HCT116 (cell line): ENCODE measurements at regions of chr12 and their contacts with region 1.

Region 1: GRCh38 chr12:26651566-26652188 is 181.3 kb downstream of the ITPR2 start:
- DNase-seq: peak; percentile 41
- ATAC-seq: peak; percentile 82
- H3K4me3 ChIP-seq: no peak overlapping the region
- H3K27ac ChIP-seq: no peak overlapping the region
- H3K4me1 ChIP-seq: no peaks in the 10 kb centered on the region
- H3K27me3 ChIP-seq: no peaks in the 10 kb centered on the region
- CTCF ChIP-seq: peak; percentile 50 to 86 (median 73); a peak in 5 of 6 replicates
- POLR2A ChIP-seq: no peak
- RAD21 ChIP-seq: peak; percentile 84

Region 2: DNA sequence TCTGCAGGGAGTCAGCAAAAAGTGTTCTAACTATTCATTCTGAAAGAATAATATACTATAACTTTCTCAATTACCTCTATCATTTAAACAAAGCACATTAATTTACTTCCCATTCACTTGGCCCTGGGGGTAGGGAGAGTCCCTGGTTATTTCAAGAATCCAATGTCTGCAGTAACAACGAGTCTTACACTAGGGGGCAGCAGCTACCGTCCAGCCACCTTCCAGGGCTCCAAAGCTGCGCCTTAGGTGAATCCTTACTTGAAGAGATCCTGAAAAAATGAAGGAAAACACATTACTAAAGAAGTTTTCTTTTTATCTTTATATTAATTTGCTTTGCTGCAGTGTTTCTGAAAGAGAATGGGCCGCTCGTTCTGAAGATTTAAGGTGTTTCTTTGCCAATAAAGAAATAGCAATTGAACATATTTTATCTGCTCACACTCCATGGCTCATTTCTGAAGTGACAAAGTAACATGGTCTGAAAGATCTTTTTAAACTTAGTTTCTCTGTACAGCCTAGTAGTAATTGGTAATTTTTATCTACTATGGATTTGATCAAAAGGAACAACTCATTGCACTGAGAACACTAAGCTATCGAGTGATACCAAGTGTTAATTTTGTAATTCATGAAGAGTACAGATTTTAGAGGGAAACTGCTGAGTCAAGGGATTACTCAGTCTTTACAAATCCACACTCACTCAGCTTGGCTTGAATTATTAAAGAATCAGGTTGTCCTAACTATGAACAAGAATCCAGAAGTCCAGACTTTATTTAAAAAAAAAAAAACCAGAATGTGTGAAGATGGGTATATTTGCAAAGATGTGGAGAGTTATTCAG is 554.4 kb before region 1 on chr12:
- CTCF ChIA-PET with region 1: no interaction called
- POLR2A ChIA-PET with region 1: no interaction called
- RAD21 ChIA-PET with region 1: no interaction called
- intact Hi-C with region 1: loop called (anchors 1 kb)
- DNase-seq: peak; percentile 53
- ATAC-seq: peak; percentile 99
- H3K4me3 ChIP-seq: no peak overlapping the region
- H3K27ac ChIP-seq: no peak overlapping the region
- H3K4me1 ChIP-seq: peaks cover 9 to 12% of the 10 kb centered on the region in 2 experiments; a peak in 3 of 4 replicates
- H3K27me3 ChIP-seq: no peaks in the 10 kb centered on the region
- CTCF ChIP-seq: peak; percentile 79 to 94 (median 87)
- POLR2A ChIP-seq: no peak
- RAD21 ChIP-seq: peak; percentile 92

Region 3: DNA sequence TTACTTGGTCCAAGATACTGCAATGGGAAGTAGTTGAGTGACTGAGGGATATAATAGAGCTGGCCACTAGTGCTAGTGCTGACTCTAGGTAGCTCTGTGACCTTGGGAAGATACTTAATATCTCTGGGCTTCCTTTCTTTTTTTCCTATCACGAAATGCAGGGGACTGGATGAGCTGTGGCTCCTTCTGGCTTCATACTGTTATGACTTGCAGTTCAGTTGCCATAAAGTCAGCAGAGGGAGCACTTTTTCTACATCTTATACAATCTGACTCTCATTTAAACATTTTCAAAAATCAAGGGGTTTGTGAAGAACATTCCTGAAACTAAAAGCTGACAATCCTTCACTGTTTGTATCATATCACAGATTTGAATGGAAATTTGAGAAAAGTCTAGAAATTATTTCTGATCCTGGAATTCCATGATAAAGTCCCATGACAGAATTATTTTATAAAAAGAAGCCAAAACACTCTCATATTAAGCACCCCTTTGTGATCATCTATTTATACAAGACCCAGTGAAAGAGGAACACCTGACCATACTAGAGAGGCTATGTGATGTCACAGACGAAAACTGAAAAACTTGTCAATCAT is 532.2 kb before region 1 on chr12:
- CTCF ChIA-PET with region 1: interaction called, 11 read pairs
- POLR2A ChIA-PET with region 1: no interaction called
- RAD21 ChIA-PET with region 1: no interaction called
- intact Hi-C with region 1: loop called (anchors 5 kb)
- DNase-seq: peak; percentile 51
- ATAC-seq: peak; percentile 58
- H3K4me3 ChIP-seq: no peak overlapping the region
- H3K27ac ChIP-seq: no peak overlapping the region
- H3K4me1 ChIP-seq: peaks cover 13 to 38% of the 10 kb centered on the region in 2 experiments
- H3K27me3 ChIP-seq: peaks cover 5% of the 10 kb centered on the region; the same call in 1 of the 2 replicates
- CTCF ChIP-seq: peak; percentile 53 to 75 (median 62)
- POLR2A ChIP-seq: no peak
- RAD21 ChIP-seq: peak; percentile 77

Region 4: GRCh38 chr12:26434299-26435068 is 217.2 kb before region 1 on chr12:
- CTCF ChIA-PET with region 1: no interaction called
- POLR2A ChIA-PET with region 1: no interaction called
- RAD21 ChIA-PET with region 1: no interaction called
- intact Hi-C with region 1: loop called (anchors 5 kb)
- DNase-seq: peak; percentile 61
- ATAC-seq: peak; percentile 92
- H3K4me3 ChIP-seq: no peak overlapping the region
- H3K27ac ChIP-seq: no peak overlapping the region
- H3K4me1 ChIP-seq: no peaks in the 10 kb centered on the region
- H3K27me3 ChIP-seq: no peaks in the 10 kb centered on the region
- CTCF ChIP-seq: peak; percentile 72 to 91 (median 87)
- POLR2A ChIP-seq: no peak
- RAD21 ChIP-seq: peak; percentile 75

Region 5: DNA sequence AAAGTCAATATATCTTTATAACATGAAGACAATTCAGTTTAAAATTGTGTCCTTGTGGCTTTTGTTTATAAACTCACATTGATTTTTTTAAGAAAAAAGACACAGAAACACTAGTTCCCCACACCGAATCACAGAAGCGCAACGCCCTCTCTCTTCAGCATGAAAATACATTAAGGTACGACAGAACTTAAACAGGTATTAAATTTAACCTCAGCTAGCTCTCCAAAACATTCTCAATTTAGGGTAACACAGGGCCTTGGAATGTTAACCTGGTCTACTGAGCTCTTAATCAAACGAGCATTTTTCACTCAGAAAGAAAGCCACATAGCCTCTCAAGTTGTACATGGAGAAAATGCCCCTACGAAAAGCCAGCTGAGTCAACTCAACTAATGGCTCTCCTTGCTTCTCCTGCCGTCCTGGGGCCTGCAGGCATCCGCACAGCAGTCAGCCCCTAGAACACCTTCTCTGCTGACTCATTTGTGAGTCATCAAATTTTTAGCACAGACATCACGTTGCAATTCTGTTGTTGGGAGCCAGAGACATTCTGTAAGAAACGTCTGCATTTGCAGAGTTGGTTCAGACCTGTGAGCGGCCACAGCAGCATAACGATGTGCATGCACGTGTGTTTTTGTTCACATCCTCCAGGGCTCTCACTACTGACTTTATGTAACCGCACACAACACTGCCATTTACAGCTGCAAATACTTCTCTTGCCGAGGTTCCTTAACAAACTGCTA is 39.7 kb after region 1 on chr12:
- CTCF ChIA-PET with region 1: no interaction called
- POLR2A ChIA-PET with region 1: no interaction called
- RAD21 ChIA-PET with region 1: no interaction called
- intact Hi-C with region 1: no loop called
- DNase-seq: peak; percentile 81
- ATAC-seq: peak; percentile 98
- H3K4me3 ChIP-seq: peak overlapping the region; percentile 13 to 43
- H3K27ac ChIP-seq: peak overlapping the region; percentile 0; the same call in 1 of the 2 replicates
- H3K4me1 ChIP-seq: peaks cover 5 to 23% of the 10 kb centered on the region in 2 experiments
- H3K27me3 ChIP-seq: no peaks in the 10 kb centered on the region
- CTCF ChIP-seq: no peak
- POLR2A ChIP-seq: no peak
- RAD21 ChIP-seq: no peak

Region 6: GRCh38 chr12:27922501-27923139 is 1270.9 kb after region 1 on chr12:
- CTCF ChIA-PET with region 1: no interaction called
- POLR2A ChIA-PET with region 1: no interaction called
- RAD21 ChIA-PET with region 1: no interaction called
- intact Hi-C with region 1: no loop called
- DNase-seq: no peak
- ATAC-seq: no peak
- H3K4me3 ChIP-seq: no peak overlapping the region
- H3K27ac ChIP-seq: no peak overlapping the region
- H3K4me1 ChIP-seq: no peaks in the 10 kb centered on the region
- H3K27me3 ChIP-seq: no peaks in the 10 kb centered on the region
- CTCF ChIP-seq: no peak
- POLR2A ChIP-seq: no peak
- RAD21 ChIP-seq: no peak